ENCODE measurements at regions of chr11 and their contacts with region 1.

Region 1: DNA sequence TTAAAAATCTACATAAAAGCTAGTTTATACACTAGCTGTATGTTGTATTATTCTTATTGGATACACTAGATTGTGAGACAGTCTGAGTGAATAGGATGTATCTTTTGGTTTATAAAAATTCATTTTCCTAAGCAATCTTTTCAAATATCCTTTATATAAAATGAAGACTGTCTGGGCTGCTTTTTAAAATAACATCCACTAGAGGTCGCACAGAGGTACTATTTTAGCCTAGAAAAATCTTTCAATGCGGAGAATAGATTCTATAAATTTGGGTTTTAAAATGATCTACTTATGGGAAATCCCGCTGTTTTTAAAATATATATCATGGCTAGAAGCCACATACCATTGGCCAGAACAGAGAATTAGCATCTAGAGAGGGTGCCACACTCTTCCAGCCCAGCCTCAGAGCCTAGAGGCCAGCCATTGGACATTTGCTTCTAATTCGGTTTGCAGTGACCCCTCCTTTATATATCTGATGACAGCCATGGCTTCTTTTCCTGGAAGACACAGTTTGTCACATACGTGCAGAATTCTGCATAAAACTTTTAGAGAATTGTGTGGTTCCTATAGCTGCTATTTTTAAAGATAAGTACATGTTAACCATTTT is 7.3 kb downstream of the C11orf97 start:
- DNase-seq: peak; percentile 46
- CTCF ChIP-seq: peak; percentile 56

Region 2: GRCh38 chr11:94597896-94598295 is 78.3 kb after region 1 on chr11:
- in situ Hi-C with region 1: loop called (anchors 5 kb)
- DNase-seq: no peak
- CTCF ChIP-seq: peak; percentile 61

Measured in GM13977 (cell line).